ENCODE measurements at regions of chr1 and their contacts with region 1.

Region 1: DNA sequence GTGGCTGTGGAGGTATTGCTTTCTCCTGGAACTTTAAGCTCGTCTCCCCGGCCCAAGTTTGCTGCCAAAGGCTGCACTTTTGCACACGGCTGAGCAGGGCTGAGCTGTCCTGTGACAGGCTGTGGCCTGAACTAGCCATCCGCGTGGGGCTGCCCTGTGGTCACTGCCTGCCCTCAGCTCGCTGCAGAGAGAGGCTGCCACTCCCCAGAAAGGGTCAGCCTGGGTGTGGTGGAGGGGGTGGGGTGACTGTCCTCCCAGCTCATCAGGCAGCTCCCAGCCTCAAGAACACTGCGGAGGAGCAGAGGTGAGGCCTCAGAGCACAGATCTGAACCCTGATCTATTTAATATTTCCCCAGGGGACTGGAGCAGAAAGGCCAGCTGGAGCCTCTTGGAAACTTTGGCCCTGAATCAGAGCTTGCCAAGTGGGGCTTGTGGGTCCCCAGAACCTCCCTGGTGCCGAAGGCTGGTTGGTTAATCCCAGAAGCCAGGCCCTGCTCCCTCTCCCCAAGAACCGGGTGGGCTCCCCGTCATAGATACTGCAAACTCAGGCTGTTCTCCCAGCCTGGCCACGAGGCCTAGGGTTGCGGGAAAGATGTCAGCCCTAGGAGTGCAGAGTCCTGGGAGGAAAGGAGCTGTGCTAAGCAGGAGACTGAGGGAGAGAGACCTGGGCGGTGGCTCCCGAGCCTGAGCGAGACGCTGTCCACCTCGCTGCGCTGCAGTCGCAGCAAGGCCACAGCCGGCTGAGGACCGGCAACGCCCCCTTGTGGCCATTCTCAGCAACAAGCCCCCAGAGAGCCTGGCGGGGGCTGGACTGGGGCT is 125.1 kb upstream of the IPO9 start:
- DNase-seq: peak; percentile 65 to 94
- H3K4me3 ChIP-seq: no peak overlapping the region
- H3K27ac ChIP-seq: no peak overlapping the region
- H3K4me1 ChIP-seq: peaks cover 2 to 9% (median 5%) of the 10 kb centered on the region in 4 experiments; a peak in 5 of 7 replicates
- H3K27me3 ChIP-seq: no peaks in the 10 kb centered on the region
- CTCF ChIP-seq: peak; percentile 87 to 99 (median 98)
- EP300 ChIP-seq: no peak
- POLR2A ChIP-seq: no peak
- RAD21 ChIP-seq: peak; percentile 99 to 100

Region 2: DNA sequence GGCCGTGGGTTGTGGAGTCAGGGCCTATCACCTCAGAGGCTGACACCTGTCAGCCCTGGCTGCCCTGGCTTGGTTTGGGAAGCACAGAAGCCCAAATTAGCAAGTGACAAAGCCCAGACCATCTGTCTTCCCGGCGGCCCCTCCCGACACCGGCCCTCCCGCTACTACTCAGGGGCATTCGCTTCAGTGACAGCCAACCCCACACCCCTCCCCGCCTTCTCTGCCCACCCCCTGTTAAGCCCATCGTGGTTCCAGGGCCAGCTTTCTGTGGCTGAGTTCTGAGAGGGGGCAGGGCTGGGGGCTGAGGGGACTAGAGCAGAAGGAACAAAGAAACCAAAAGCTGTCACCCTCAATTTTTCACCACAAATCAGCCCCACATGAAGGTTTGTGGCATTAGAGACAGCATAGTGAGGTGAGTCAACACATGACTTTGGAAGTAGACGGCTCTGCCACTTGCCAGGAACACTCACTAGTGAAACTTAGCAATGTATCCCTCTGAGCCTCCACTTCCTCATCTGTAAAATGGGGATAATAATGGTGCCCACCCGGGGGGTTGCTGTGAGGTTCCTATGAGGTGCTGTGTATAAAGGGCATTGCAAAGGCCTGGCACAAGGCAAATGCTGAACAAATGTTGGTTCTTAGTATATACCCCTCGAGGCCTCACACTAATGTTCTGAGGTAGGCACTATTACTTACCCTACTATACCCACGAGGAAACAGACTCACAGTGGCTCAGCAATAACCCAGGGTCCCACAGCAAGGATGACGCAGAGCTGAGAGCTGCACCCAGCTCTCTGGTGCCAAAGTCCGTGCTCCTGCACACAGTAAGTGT is 277.1 kb before region 1 on chr1:
- CTCF ChIA-PET with region 1: no interaction called
- POLR2A ChIA-PET with region 1: no interaction called
- DNase-seq: no peak
- H3K4me3 ChIP-seq: no peak overlapping the region
- H3K27ac ChIP-seq: no peak overlapping the region
- H3K4me1 ChIP-seq: peaks cover 0 to 2% (median 0%) of the 10 kb centered on the region in 4 experiments; a peak in 1 of 7 replicates
- H3K27me3 ChIP-seq: no peaks in the 10 kb centered on the region
- CTCF ChIP-seq: no peak
- EP300 ChIP-seq: no peak
- POLR2A ChIP-seq: no peak
- RAD21 ChIP-seq: no peak

Region 3: GRCh38 chr1:201551877-201552731 is 151.7 kb before region 1 on chr1:
- CTCF ChIA-PET with region 1: interaction called, 499 read pairs
- POLR2A ChIA-PET with region 1: no interaction called
- DNase-seq: no peak
- H3K4me3 ChIP-seq: no peak overlapping the region
- H3K27ac ChIP-seq: no peak overlapping the region
- H3K4me1 ChIP-seq: peaks cover 0 to 6% (median 1%) of the 10 kb centered on the region in 4 experiments; a peak in 3 of 7 replicates
- H3K27me3 ChIP-seq: no peaks in the 10 kb centered on the region
- CTCF ChIP-seq: no peak
- EP300 ChIP-seq: no peak
- POLR2A ChIP-seq: no peak
- RAD21 ChIP-seq: no peak

Region 4: GRCh38 chr1:201608635-201609395 is 95.0 kb before region 1 on chr1:
- CTCF ChIA-PET with region 1: interaction called, 21 read pairs
- POLR2A ChIA-PET with region 1: no interaction called
- DNase-seq: no peak
- H3K4me3 ChIP-seq: no peak overlapping the region
- H3K27ac ChIP-seq: no peak overlapping the region
- H3K4me1 ChIP-seq: 0 out of 7 replicates have a peak, but pooled peaks cover 0 to 3% (median 0%) of the 10 kb centered on the region in 4 experiments
- H3K27me3 ChIP-seq: no peaks in the 10 kb centered on the region
- CTCF ChIP-seq: no peak
- EP300 ChIP-seq: no peak
- POLR2A ChIP-seq: no peak
- RAD21 ChIP-seq: no peak

Region 5: DNA sequence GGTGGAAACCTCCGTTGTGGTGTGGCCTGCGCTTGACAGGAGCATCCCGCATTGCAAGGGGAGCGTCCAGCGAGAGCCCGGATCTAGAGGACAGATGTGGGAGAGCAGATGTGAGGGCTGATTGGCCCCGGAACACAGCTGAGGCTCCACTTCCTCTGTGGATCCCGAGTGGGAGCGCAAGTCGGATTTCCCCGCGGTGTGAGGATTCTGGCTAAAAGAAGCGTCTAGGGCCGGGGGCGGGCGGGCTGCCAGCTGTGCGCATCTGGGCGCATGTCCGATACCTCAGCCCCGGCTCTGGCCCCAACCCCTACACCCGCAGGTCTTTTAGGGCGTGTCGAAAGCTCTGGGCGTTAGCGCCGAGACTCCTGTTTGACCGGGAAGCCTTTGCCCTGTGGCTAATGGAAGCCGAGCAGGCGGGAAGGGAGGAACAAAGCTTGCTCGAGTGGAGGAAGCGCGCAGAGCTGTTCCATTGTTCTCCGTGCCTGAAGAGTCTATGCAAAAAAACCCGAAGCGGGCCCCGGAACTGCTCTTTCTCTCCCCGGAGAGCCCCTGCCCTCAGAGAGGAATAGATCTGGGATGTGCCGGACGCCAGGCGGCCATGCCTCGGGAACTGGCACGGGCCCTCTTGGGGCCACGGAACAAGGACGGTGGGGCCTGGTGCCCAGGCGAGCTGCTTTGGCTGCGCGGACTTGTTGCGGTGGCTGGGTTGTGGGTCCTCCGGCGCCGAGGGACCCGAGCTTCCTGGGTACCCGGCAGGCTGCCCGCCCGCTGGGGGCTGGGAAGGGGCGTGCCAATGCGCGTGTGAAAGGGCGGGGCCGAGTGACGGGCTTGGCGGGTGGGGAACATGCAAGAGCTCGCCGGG is 53.8 kb before region 1 on chr1:
- CTCF ChIA-PET with region 1: interaction called, 34 read pairs
- POLR2A ChIA-PET with region 1: interaction called, 5 read pairs
- DNase-seq: peak; percentile 47 to 90
- H3K4me3 ChIP-seq: peak overlapping the region; percentile 67 to 83 (median 70)
- H3K27ac ChIP-seq: no peak overlapping the region
- H3K4me1 ChIP-seq: peaks cover 13 to 33% (median 25%) of the 10 kb centered on the region in 4 experiments
- H3K27me3 ChIP-seq: peaks cover 0 to 22% (median 19%) of the 10 kb centered on the region in 4 experiments; a peak in 5 of 7 replicates
- CTCF ChIP-seq: no peak
- EP300 ChIP-seq: no peak
- POLR2A ChIP-seq: 0 out of 3 replicates have a peak, but pooled peaks of 1 of the 2 experiments have one; percentile 29
- RAD21 ChIP-seq: no peak

Region 6: GRCh38 chr1:201660931-201661822 is 42.7 kb before region 1 on chr1:
- CTCF ChIA-PET with region 1: interaction called, 34 read pairs
- POLR2A ChIA-PET with region 1: no interaction called
- DNase-seq: no peak
- H3K4me3 ChIP-seq: no peak overlapping the region
- H3K27ac ChIP-seq: no peak overlapping the region
- H3K4me1 ChIP-seq: no peaks in the 10 kb centered on the region; a peak in 1 of 7 replicates
- H3K27me3 ChIP-seq: no peaks in the 10 kb centered on the region
- CTCF ChIP-seq: no peak
- EP300 ChIP-seq: no peak
- POLR2A ChIP-seq: no peak
- RAD21 ChIP-seq: no peak

Region 7: DNA sequence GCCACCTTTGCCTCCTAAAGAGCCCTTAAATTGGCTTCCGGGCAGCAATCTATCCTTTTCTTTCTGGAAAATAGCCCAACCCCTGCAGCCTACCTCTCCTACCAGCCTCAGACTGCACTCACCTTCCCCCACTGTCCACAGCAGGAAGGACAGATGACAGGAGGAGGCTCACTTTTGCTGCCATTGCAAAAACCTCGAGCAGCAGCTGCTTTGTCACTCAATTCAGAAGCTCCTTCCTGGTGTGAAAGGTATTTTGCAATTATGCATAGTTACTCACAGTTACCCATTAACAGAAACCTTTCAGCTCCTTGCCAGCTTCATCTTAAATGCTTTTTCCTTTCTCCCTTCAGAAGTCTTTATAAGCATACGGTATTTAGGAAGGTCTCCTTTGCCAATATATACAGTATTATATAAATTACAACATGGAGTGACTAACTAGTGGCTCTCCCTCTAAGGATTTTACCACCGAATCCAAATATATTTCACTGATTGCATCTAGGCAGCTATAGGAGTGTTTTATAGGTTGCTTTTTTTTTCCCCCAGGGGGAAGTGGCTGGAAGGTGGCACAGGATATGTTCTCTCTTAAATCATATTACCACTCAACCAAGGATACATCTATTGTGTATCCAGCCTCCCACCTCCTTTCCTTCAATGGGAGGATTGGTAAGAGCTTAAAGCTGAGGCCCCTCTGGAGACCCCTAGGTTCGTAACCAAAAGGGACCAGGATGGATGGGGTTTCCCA is 16.9 kb before region 1 on chr1:
- CTCF ChIA-PET with region 1: interaction called, 38 read pairs
- POLR2A ChIA-PET with region 1: no interaction called
- DNase-seq: no peak
- H3K4me3 ChIP-seq: peak overlapping the region in 2 of 4 experiments; percentile 2 to 27; a peak in 3 of 8 replicates
- H3K27ac ChIP-seq: no peak overlapping the region
- H3K4me1 ChIP-seq: peaks cover 13 to 31% (median 23%) of the 10 kb centered on the region in 4 experiments
- H3K27me3 ChIP-seq: no peaks in the 10 kb centered on the region
- CTCF ChIP-seq: no peak
- EP300 ChIP-seq: no peak; a peak in 1 of 3 replicates
- POLR2A ChIP-seq: no peak
- RAD21 ChIP-seq: 0 out of 4 replicates have a peak, but pooled peaks of 1 of the 2 experiments have one; percentile 1

Region 8: DNA sequence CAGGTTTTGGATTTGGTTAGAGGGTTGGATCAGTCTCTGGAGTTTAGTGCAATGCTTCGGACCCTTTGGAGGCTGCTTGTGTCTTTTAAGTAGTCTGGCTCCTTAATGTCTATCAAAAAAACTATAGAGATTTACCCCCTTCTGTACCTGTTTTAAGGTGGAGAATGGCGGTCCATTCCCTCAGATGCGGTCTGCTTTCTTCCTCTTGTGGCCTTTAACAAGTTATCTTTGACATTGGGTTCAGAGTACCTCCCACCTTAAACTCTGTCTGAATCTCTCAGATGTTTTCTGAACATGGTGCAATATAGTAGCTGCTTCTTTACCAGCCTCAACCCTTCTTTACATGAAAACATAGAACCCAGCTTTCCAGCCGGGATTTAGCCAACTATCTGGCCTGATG is 127.5 kb after region 1 on chr1:
- CTCF ChIA-PET with region 1: no interaction called
- POLR2A ChIA-PET with region 1: no interaction called
- DNase-seq: no peak
- H3K4me3 ChIP-seq: 0 out of 8 replicates have a peak overlapping the region, but pooled peaks of 1 of the 4 experiments have one; percentile 8
- H3K27ac ChIP-seq: no peak overlapping the region
- H3K4me1 ChIP-seq: peaks cover 0 to 5% (median 1%) of the 10 kb centered on the region in 4 experiments; a peak in 3 of 7 replicates
- H3K27me3 ChIP-seq: no peaks in the 10 kb centered on the region
- CTCF ChIP-seq: no peak
- EP300 ChIP-seq: no peak
- POLR2A ChIP-seq: no peak
- RAD21 ChIP-seq: no peak